ENCODE measurements at regions of chr12 and their contacts with region 1.

Region 1: GRCh38 chr12:6778574-6779550 is 6.5 kb downstream of the LAG3 start:
- DNase-seq: peak; percentile 92
- ATAC-seq: peak; percentile 98
- H3K4me3 ChIP-seq: peak overlapping the region in 4 of 5 experiments; percentile 48 to 56 (median 50)
- H3K4me3 Mint-ChIP-seq: peak overlapping the region; percentile 85
- H3K27ac ChIP-seq: no peak overlapping the region
- H3K27ac Mint-ChIP-seq: peak overlapping the region; percentile 34
- H3K4me1 ChIP-seq: peaks cover 15% of the 10 kb centered on the region in 2 donors
- H3K4me1 Mint-ChIP-seq: peaks cover 11% of the 10 kb centered on the region
- H3K27me3 ChIP-seq: peaks cover 0 to 42% (median 28%) of the 10 kb centered on the region in 4 experiments
- H3K27me3 Mint-ChIP-seq: peaks cover 42% of the 10 kb centered on the region
- CTCF ChIP-seq: peak; percentile 90

Region 2: DNA sequence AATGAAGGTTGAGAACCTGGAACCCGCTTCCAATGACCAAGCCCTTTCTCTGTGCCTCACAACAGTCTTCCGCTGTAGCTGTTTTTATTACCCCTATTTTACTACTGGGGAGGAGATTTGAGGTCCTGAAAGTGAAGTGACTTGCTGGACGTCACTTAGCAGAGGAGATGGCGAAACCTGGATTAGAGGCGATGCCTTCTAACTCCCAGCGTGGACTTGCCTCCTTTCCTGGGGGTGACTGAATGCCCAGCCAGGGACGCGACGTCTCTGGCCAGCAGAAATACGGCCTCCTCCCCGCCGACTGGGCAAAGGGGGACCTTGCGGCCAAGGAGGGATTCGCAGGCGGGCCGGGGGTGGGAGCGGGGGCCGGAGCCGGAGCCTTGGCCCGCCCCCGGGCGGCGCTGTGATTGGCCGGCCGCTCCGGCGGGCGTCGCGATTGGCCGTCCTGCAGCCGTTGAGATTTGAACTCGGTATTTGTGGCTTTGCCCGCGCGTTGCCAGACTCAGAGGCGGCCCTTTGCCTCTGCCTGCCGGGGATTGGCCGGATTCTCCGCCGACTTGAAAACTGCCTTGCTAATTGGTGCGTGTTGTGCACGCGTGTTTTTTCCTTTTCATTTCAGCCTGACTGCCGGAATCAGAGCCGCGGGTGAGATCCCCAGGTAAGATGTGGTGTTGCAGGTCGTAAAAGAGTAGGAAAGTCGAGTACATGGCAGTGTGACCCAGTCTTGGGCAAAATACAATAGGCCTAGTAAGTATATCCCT is 285.2 kb before region 1 on chr12 and contains the start of gene NCAPD2:
- CTCF ChIA-PET with region 1: no interaction called
- POLR2A ChIA-PET with region 1: no interaction called
- intact Hi-C with region 1: no loop called
- DNase-seq: peak; percentile 97
- ATAC-seq: peak; percentile 86
- H3K4me3 ChIP-seq: peak within 1 kb of the TSS; percentile 68 to 100 (median 95)
- H3K4me3 Mint-ChIP-seq: peak within 1 kb of the TSS; percentile 98
- H3K27ac ChIP-seq: peak within 1 kb of the TSS; percentile 92 to 95
- H3K27ac Mint-ChIP-seq: peak within 1 kb of the TSS; percentile 95
- H3K4me1 ChIP-seq: peaks cover 22 to 27% of the 10 kb centered on the region in 2 donors
- H3K4me1 Mint-ChIP-seq: peaks cover 31% of the 10 kb centered on the region
- H3K27me3 ChIP-seq: no peaks in the 10 kb centered on the region
- H3K27me3 Mint-ChIP-seq: no peaks in the 10 kb centered on the region
- CTCF ChIP-seq: peak; percentile 22
- total RNA-seq, gene NCAPD2: 41.1 and 42.1 TPM in 2 replicates

Region 3: DNA sequence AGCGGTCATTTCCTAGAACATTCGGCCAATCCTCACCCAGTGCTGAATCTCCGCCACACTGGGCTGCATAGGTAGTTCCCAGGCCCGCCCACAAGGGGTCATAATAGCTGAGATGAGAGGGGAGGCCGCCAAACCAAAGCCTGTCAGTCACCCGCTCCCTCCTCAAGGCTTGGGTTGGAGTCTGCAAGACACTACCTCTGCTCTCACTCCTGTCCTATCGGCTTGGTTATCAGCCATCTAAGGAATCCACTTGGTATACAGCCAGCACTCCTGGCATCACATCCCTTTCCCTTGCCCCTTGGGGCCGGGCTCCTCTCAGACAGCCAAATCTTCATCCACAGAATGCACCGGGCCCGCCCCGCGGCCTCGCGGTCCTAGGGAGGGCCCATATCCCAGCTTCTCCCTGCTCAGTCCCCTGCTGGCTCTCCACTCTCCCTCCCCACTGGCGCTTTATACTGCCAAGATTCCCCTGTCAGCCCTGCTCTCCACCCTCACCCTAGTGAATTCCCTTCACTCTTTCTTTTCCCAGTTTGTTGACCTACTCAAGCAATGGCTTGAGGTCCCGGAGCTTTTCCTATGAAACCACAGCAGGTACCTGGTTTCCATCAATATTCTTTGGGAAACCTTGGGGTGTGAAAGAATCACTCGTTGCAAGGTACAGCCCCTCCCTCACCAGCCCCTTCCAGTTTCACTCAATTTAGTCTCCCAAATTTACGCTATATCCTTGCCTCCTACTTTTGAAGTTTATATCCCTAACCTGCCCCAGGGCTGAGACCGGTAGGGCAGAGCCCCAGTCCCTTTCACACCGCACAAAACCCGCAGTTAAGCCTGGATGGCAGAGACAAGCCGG is 224.5 kb before region 1 on chr12:
- CTCF ChIA-PET with region 1: interaction called, 5 read pairs
- POLR2A ChIA-PET with region 1: no interaction called
- intact Hi-C with region 1: loop called (anchors 1 kb)
- DNase-seq: peak; percentile 82
- ATAC-seq: peak; percentile 70
- H3K4me3 ChIP-seq: peak overlapping the region in 4 of 5 experiments; percentile 52 to 93 (median 84)
- H3K4me3 Mint-ChIP-seq: peak overlapping the region; percentile 89
- H3K27ac ChIP-seq: no peak overlapping the region
- H3K27ac Mint-ChIP-seq: peak overlapping the region; percentile 67
- H3K4me1 ChIP-seq: peaks cover 12 to 38% of the 10 kb centered on the region in 2 donors
- H3K4me1 Mint-ChIP-seq: peaks cover 36% of the 10 kb centered on the region
- H3K27me3 ChIP-seq: no peaks in the 10 kb centered on the region
- H3K27me3 Mint-ChIP-seq: no peaks in the 10 kb centered on the region
- CTCF ChIP-seq: peak; percentile 81

Region 4: DNA sequence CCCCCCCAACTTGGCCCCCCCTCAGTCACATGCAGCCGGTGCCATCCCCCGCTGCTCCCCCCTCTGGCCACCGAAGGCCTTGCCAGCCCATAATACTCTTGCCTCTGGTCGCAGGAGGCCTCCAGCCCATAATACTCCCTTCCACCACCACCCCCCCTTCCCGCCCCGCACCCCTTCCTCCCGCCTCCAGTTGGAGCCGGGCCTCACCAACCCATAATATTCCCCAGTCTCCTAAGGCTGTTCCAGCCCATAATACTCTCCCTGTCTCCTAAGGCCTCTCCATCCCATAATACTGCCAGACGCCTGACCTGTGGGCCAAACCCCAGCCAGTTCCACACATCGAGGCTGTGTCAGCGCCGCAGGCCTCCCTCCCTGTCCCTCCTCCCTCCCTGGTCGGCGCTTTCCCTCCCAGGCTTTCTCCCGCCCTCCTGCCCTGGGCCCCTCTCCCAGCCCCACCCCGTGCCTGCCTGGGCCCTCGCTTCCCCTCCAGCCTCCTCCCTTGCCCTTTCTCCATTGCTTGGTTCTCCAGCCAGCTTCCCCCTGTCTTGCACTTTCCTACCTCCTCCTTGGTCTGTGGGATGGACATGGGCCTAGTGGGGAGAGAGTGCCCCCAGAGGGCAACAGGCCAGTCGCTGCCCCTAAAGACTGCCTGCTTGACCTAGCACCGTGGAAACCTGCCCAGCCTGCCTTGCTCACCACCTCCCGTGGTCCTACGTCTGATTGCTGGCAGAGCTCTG is 164.9 kb before region 1 on chr12:
- CTCF ChIA-PET with region 1: interaction called, 8 read pairs
- POLR2A ChIA-PET with region 1: interaction called, 7 read pairs
- intact Hi-C with region 1: loop called (anchors 1 kb)
- DNase-seq: peak; percentile 81
- ATAC-seq: peak; percentile 48
- H3K4me3 ChIP-seq: no peak overlapping the region
- H3K4me3 Mint-ChIP-seq: peak overlapping the region; percentile 24
- H3K27ac ChIP-seq: peak overlapping the region; percentile 63 to 88
- H3K27ac Mint-ChIP-seq: peak overlapping the region; percentile 87
- H3K4me1 ChIP-seq: peaks cover 32 to 51% of the 10 kb centered on the region in 2 donors
- H3K4me1 Mint-ChIP-seq: peaks cover 65% of the 10 kb centered on the region
- H3K27me3 ChIP-seq: no peaks in the 10 kb centered on the region
- H3K27me3 Mint-ChIP-seq: no peaks in the 10 kb centered on the region
- CTCF ChIP-seq: no peak

Region 5: GRCh38 chr12:6735448-6736191 is 43.2 kb before region 1 on chr12:
- CTCF ChIA-PET with region 1: interaction called, 8 read pairs
- POLR2A ChIA-PET with region 1: no interaction called
- intact Hi-C with region 1: loop called (anchors 1 kb)
- DNase-seq: peak; percentile 51
- ATAC-seq: peak; percentile 68
- H3K4me3 ChIP-seq: no peak overlapping the region
- H3K4me3 Mint-ChIP-seq: no peak overlapping the region
- H3K27ac ChIP-seq: no peak overlapping the region
- H3K27ac Mint-ChIP-seq: no peak overlapping the region
- H3K4me1 ChIP-seq: no peaks in the 10 kb centered on the region
- H3K4me1 Mint-ChIP-seq: no peaks in the 10 kb centered on the region
- H3K27me3 ChIP-seq: no peaks in the 10 kb centered on the region
- H3K27me3 Mint-ChIP-seq: no peaks in the 10 kb centered on the region
- CTCF ChIP-seq: peak; percentile 43

Region 6: DNA sequence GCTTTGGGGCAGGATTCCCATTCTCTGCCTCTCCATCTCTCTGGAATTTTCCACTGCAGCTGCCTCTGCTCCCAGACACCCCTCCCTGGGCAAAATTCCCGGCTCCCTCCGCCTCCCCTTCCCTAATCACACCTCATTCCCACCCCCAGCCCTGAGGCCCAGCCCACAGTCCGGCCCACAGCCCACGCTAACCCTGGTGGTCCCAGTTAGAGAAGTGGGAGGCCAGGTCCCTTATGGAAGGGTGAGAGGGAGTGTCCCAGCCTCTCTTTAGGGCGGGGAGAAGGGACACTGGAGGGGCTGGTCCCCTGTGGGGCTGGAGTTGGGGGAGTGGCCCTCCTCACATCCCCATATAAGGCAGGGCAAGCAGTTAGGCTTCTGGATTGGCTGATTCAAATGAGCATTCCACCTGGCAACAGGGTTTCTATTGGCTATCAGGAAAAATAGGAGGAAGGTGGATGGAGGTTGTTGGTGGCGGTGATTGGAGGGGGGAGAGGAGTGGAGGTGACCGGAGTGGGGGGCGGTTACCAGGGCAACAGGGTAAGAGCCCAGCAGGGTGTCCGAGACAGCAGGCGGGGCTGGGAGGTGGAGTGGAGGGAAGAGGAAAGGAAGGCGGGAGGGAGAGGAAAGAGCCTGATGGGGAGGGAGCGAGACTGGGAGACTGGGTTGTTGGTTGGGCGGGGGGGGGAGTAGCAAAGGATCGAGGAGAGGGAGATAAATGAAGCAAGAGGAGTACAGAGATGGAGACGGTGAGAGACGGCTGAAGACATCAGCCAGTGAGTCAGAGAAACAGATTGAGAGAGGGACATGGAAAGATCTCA is 14.6 kb before region 1 on chr12:
- CTCF ChIA-PET with region 1: interaction called, 20 read pairs
- POLR2A ChIA-PET with region 1: interaction called, 7 read pairs
- intact Hi-C with region 1: no loop called
- DNase-seq: peak; percentile 80
- ATAC-seq: peak; percentile 72
- H3K4me3 ChIP-seq: peak overlapping the region in 1 of 5 experiments; percentile 14
- H3K4me3 Mint-ChIP-seq: peak overlapping the region; percentile 61
- H3K27ac ChIP-seq: no peak overlapping the region
- H3K27ac Mint-ChIP-seq: peak overlapping the region; percentile 28
- H3K4me1 ChIP-seq: peaks cover 33 to 36% of the 10 kb centered on the region in 2 donors
- H3K4me1 Mint-ChIP-seq: peaks cover 29% of the 10 kb centered on the region
- H3K27me3 ChIP-seq: peaks cover 0 to 44% (median 27%) of the 10 kb centered on the region in 4 experiments
- H3K27me3 Mint-ChIP-seq: peaks cover 43% of the 10 kb centered on the region
- CTCF ChIP-seq: no peak